ENCODE measurements at regions of chr1 and their contacts with region 1.

Region 1: DNA sequence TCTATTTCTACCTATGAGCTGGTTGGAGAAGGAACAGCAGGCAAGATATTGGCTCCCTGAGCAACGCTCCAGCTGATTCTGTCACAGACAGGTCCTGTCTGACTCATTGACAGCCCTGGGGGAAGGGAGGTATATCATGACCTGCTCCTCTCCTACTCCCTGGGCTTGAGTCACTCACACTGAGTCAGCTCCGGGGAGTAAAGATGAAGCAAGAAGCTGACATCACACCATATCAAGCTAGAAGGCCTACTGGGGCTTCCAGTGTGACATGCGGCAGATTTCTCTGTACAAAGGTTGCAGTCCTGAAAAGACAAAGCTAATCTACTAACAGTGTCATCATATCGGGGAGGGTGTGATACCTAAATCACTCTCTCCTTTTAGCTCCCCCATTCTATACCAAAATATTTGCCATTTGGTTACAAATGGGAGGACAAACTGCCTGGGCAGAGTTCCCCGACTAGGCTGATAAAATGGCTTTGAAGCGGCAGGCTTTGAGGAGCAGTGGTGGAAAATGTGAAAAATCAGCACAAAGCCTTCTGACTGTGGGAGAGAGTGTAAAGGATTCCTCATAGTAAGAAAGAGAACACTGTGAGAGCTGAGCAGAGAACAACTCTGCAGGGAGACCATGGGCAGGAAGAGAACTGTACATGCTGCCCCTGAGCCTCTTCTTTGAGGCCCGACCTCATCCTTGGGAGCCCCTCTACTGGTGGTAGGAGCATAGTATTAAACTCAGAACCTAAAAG is 15.5 kb downstream of the PI4KB start:
- DNase-seq: peak; percentile 96
- ATAC-seq: peak; percentile 98
- H3K4me3 ChIP-seq: no peak overlapping the region
- H3K27ac ChIP-seq: peak overlapping the region; percentile 48; the same call in 1 of the 2 replicates
- H3K4me1 ChIP-seq: peaks cover 16 to 34% of the 10 kb centered on the region in 2 experiments
- H3K27me3 ChIP-seq: no peaks in the 10 kb centered on the region
- CTCF ChIP-seq: no peak
- POLR2A ChIP-seq: no peak
- RAD21 ChIP-seq: peak; percentile 24; the same call in 1 of the 2 replicates

Region 2: GRCh38 chr1:151294742-151295462 is 16.9 kb before region 1 on chr1:
- CTCF ChIA-PET with region 1: interaction called, 23 read pairs
- POLR2A ChIA-PET with region 1: interaction called, 3 read pairs
- RAD21 ChIA-PET with region 1: no interaction called
- intact Hi-C with region 1: no loop called
- DNase-seq: no peak
- ATAC-seq: no peak
- H3K4me3 ChIP-seq: no peak overlapping the region
- H3K27ac ChIP-seq: no peak overlapping the region
- H3K4me1 ChIP-seq: no peaks in the 10 kb centered on the region
- H3K27me3 ChIP-seq: no peaks in the 10 kb centered on the region
- CTCF ChIP-seq: no peak
- POLR2A ChIP-seq: no peak
- RAD21 ChIP-seq: no peak

Region 3: DNA sequence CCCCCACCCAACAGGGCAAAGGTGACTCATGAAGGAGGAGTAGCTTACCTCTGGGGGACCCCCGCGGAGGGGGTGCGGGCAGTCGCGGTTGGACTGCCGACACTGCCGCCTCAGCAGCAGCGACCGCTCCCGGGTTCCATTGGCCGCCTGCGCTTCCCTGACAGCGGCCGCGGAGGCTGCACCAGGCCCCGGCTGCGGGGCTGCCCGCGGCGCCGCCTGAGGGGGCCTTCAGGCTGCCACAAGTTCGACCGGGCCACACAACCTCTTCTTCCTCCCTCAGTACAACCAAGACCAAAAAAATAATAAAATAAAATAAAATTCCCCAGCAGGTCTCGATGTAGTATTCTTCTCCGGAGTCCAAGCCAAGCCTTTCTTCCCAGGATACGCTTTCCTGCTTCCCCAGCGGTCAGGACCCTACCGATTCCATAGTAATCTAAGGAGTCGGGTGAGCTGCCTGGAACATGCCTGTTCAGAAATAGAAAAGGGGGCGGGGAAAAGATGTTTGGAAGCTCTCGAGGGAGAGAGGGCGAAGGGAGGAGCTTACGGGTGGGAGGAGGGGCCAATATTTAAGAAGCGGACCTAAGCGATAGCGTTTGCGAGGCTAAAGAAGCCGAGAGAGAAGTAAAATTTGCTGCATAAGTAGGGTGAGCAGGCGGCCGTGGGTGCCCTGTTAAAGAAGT is 15.6 kb after region 1 on chr1 and contains the start of gene PI4KB:
- CTCF ChIA-PET with region 1: interaction called, 3 read pairs
- POLR2A ChIA-PET with region 1: interaction called, 18 read pairs
- RAD21 ChIA-PET with region 1: no interaction called
- intact Hi-C with region 1: no loop called
- DNase-seq: peak; percentile 97
- ATAC-seq: peak; percentile 96
- H3K4me3 ChIP-seq: peak within 1 kb of the TSS; percentile 80 to 82
- H3K27ac ChIP-seq: peak within 1 kb of the TSS; percentile 80
- H3K4me1 ChIP-seq: peaks cover 12 to 24% of the 10 kb centered on the region in 2 experiments
- H3K27me3 ChIP-seq: no peaks in the 10 kb centered on the region
- CTCF ChIP-seq: no peak
- POLR2A ChIP-seq: peak; percentile 68
- RAD21 ChIP-seq: no peak
- total RNA-seq, gene PI4KB: 45.1 TPM

Region 4: GRCh38 chr1:151340870-151341754 is 29.4 kb after region 1 on chr1:
- CTCF ChIA-PET with region 1: interaction called, 33 read pairs
- POLR2A ChIA-PET with region 1: interaction called, 4 read pairs
- RAD21 ChIA-PET with region 1: interaction called in 1 of 2 experiments, 4 read pairs
- intact Hi-C with region 1: loop called (anchors 2 kb)
- DNase-seq: peak; percentile 75
- ATAC-seq: peak; percentile 92
- H3K4me3 ChIP-seq: no peak overlapping the region
- H3K27ac ChIP-seq: peak overlapping the region; percentile 12; the same call in 1 of the 2 replicates
- H3K4me1 ChIP-seq: peaks cover 0 to 20% of the 10 kb centered on the region in 2 experiments; a peak in 2 of 4 replicates
- H3K27me3 ChIP-seq: no peaks in the 10 kb centered on the region
- CTCF ChIP-seq: peak; percentile 55 to 94 (median 82); a peak in 5 of 6 replicates
- POLR2A ChIP-seq: no peak
- RAD21 ChIP-seq: peak; percentile 95

Region 5: DNA sequence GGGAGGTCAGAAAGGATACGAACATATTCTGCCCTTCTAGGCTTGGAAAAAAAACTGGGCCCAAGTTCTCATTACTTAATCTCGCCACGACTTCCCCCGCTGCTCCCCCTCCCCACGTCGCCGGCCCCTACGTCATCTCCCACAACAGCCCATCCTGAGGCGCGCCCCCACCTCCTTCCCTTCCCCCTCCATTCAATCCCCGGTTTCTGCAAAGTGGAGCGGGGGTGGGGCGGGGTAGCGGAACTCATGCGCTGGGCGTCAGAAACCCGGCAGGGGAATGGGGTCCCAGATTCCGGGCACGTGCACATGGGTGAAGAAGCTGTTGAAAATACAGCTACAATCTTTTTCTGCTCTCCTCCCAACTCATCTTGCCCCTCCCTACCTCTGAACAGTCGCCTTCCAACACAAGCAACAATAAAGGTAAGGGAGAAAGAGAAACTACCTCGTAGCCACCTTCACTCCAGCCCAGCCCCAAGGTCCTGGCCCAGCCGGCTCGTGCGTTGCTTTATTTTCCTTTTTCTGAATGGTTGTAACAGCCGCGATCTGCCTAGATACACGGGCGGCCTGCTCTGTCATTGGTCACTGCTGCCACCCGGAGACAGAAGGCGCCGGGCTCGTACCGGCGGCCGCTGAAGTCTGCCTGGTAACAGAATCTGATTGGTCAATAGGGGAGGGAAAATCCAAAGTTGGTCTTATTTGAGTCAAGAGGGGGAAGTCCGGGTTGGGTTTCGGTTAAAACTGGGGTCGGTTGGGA is 35.2 kb after region 1 on chr1 and contains the start of gene RFX5:
- CTCF ChIA-PET with region 1: no interaction called
- POLR2A ChIA-PET with region 1: no interaction called
- RAD21 ChIA-PET with region 1: no interaction called
- intact Hi-C with region 1: loop called (anchors 2 kb)
- DNase-seq: peak; percentile 98
- ATAC-seq: peak; percentile 97
- H3K4me3 ChIP-seq: peak within 1 kb of the TSS; percentile 67 to 72
- H3K27ac ChIP-seq: peak within 1 kb of the TSS; percentile 78
- H3K4me1 ChIP-seq: peaks cover 5 to 25% of the 10 kb centered on the region in 2 experiments
- H3K27me3 ChIP-seq: no peaks in the 10 kb centered on the region
- CTCF ChIP-seq: no peak
- POLR2A ChIP-seq: peak; percentile 57
- RAD21 ChIP-seq: no peak
- total RNA-seq, gene RFX5: 52.7 TPM